Dendritic cell treated with granulocyte-macrophage colony-stimulating factor and Interleukin-4, amounts not matched to agents 40 ng/mL and 50 ng/mL, for 4 days (primary cell): ENCODE measurements at regions of chr5 and their contacts with region 1.

Region 1: DNA sequence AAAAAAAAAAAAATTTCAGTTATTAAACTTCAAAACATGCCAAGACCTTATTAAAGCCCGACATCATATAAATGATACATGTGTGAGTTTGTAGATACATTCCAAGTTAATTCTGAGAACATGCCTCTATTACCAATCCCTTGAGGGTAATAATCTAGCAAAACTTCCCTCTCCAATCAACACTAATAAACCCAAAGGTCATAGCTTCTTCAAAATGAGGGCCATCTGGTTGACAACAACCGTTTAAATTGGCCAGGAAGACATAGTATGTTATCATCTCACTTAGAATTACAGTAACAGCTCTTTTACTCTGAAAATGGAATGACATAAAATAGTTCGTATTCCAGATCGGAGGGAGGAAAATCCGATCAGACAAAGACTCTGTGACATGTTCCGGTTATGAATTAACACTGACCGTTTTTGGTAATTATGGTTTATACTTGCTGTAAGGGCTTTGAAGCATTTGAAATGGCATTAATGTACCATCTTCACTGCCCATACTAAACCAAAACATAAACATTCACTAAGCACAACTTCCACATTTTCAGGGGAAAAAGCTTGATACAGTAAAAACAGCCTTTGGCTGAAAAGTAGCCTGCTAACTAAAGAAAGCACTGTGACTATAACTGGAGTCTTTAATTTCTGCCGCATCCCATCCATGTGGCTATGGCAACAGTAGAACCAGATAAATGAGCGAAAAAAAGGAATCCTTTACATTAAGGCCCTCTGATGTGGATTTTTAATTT is 50.3 kb downstream of the ANKH start:
- H3K4me3 Mint-ChIP-seq: no peak overlapping the region
- H3K27ac Mint-ChIP-seq: peak overlapping the region; percentile 51
- H3K4me1 Mint-ChIP-seq: peaks cover 32% of the 10 kb centered on the region
- H3K27me3 Mint-ChIP-seq: no peaks in the 10 kb centered on the region

Region 2: GRCh38 chr5:14787801-14788579 is 33.3 kb before region 1 on chr5:
- intact Hi-C with region 1: loop called (anchors 5 kb)
- H3K4me3 Mint-ChIP-seq: no peak overlapping the region
- H3K27ac Mint-ChIP-seq: no peak overlapping the region
- H3K4me1 Mint-ChIP-seq: peaks cover 43% of the 10 kb centered on the region
- H3K27me3 Mint-ChIP-seq: no peaks in the 10 kb centered on the region

Region 3: GRCh38 chr5:15285901-15286583 is 464.8 kb after region 1 on chr5:
- intact Hi-C with region 1: no loop called
- H3K4me3 Mint-ChIP-seq: no peak overlapping the region
- H3K27ac Mint-ChIP-seq: no peak overlapping the region
- H3K4me1 Mint-ChIP-seq: no peaks in the 10 kb centered on the region
- H3K27me3 Mint-ChIP-seq: no peaks in the 10 kb centered on the region